MCF 10A (cell line): ENCODE measurements at regions of chr17 and their contacts with region 1.

Region 1: GRCh38 chr17:74493381-74493833 is 27.0 kb downstream of the CD300A start:
- DNase-seq: peak; percentile 70
- H3K4me3 Mint-ChIP-seq: no peak overlapping the region
- H3K27ac Mint-ChIP-seq: no peak overlapping the region
- H3K4me1 Mint-ChIP-seq: no peaks in the 10 kb centered on the region
- H3K27me3 Mint-ChIP-seq: peaks cover 28% of the 10 kb centered on the region
- CTCF ChIP-seq: peak; percentile 82

Region 2: DNA sequence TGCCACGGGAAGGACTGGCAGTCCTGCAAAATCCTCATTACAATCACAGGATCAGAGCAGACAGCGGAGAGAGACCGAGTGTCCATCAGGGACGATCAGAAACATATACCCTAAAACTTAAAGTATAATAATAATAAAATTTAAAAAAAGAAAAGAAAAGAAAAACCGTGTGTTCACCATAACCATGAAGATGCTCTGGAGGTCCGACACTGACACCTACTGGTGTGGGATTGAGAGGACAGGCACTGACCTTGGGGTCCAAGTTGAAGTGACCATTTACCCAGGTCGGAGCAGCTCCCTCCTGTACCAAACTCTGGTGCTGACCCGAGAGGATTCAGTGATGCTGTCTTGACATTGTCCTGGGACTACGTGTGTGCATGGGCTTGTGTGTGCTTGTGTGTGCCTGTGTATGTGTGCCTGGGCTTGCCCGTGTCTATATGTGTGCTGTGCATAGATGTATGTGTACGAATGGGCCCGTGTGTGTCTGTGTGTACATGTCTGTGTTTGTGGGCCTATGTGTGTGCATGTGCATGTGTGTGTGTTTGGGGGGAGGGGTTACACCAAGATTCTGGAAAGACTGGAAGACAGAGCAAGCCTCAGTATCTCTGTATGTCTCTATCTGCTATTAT is 108.7 kb after region 1 on chr17:
- CTCF ChIA-PET with region 1: interaction called, 7 read pairs
- POLR2A ChIA-PET with region 1: no interaction called
- intact Hi-C with region 1: loop called (anchors 1 kb)
- DNase-seq: peak; percentile 80
- H3K4me3 Mint-ChIP-seq: no peak overlapping the region
- H3K27ac Mint-ChIP-seq: no peak overlapping the region
- H3K4me1 Mint-ChIP-seq: peaks cover 45% of the 10 kb centered on the region
- H3K27me3 Mint-ChIP-seq: no peaks in the 10 kb centered on the region
- CTCF ChIP-seq: peak; percentile 88